Adrenal gland (tissue), 19 donors: ENCODE measurements at regions of chr7 and their contacts with region 1.

Region 1: DNA sequence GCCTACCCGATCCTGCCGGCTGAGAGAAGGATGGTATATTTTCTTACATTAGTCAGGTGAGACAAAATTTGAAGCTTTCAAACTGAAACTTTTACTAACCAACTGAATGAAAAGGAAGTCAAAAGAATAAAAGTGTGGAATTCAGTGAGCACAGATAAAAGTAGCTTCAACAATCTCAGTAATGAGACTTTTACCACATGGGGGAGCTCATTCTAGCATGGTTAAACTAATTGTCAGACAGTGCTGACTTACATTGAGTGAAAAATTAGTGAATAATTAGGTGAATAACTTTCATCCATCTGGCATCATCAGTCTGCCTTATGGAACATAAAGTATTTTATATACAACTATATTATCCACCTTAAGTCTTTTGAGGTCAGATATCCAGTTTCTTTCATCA is 8.4 kb downstream of the FAM237B start:
- DNase-seq: no peak
- H3K4me3 ChIP-seq: no peak overlapping the region
- H3K27ac ChIP-seq: no peak overlapping the region
- H3K4me1 ChIP-seq: no peaks in the 10 kb centered on the region
- H3K27me3 ChIP-seq: no peaks in the 10 kb centered on the region
- CTCF ChIP-seq: peak in 1 of 6 experiments; percentile 23
- POLR2A ChIP-seq: no peak

Region 2: GRCh38 chr7:90430614-90431471 is 118.1 kb after region 1 on chr7:
- intact Hi-C with region 1: loop called in 1 of 2 experiments (anchors 10 kb)
- DNase-seq: no peak
- H3K4me3 ChIP-seq: no peak overlapping the region
- H3K27ac ChIP-seq: no peak overlapping the region
- H3K4me1 ChIP-seq: no peaks in the 10 kb centered on the region
- H3K27me3 ChIP-seq: no peaks in the 10 kb centered on the region
- CTCF ChIP-seq: no peak
- POLR2A ChIP-seq: no peak

Region 3: GRCh38 chr7:90488240-90488639 is 175.5 kb after region 1 on chr7:
- intact Hi-C with region 1: no loop called
- DNase-seq: no peak
- H3K4me3 ChIP-seq: no peak overlapping the region
- H3K27ac ChIP-seq: no peak overlapping the region
- H3K4me1 ChIP-seq: no peaks in the 10 kb centered on the region
- H3K27me3 ChIP-seq: no peaks in the 10 kb centered on the region
- CTCF ChIP-seq: no peak
- POLR2A ChIP-seq: no peak